ENCODE measurements at regions of chr10 and their contacts with region 1.

Region 1: DNA sequence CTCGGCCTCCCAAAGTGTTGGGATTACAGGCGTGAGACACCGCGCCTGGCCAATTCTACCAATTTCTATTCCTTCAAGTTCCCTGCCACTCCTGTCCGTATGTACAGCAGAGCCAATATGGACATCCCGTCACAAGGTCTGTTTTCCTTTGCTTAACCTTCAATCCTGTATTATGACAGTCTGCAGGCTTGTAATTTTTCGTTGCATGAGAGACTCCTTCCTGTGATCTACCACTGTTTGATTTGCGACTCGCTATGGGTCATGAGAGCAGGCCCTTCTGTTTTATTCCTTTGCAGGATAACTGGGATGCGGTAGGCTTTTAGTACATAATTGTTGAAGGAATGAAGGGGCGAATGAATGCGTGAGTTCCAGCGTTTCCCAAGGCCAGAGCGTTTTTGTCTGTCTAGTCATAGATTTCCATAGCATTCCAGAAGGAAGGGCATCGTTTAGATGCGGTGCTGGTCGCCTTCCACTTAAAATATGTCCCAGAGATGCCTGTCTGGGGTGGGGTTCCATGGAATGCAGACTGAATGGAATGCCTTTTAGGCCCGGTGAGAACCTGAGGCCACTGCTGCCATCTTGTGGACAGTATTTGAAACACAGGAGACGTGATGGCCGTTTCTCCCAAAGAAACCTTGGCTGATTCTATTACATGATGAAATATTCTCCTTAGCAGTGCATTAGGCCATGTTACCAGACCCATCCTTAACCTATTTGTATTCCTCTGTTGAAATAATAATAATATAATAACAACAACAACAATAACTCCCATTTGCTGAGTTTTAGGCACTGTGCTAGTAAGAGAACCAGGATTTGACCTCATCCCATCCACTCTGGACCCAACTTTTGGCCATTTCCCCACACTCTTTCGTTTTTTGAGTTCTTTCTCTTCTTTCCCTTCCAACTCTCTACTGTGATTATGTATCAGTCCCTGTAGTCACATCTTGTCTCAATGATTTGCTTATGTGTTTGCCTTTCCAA is 193.2 kb downstream of the MYOF start:
- DNase-seq: peak; percentile 17
- H3K4me3 Mint-ChIP-seq: no peak overlapping the region
- H3K27ac Mint-ChIP-seq: no peak overlapping the region
- H3K4me1 Mint-ChIP-seq: no peaks in the 10 kb centered on the region
- H3K27me3 Mint-ChIP-seq: peaks cover 6% of the 10 kb centered on the region

Region 2: GRCh38 chr10:92886334-92886961 is 402.5 kb before region 1 on chr10:
- intact Hi-C with region 1: loop called (anchors 5 kb)
- DNase-seq: no peak
- H3K4me3 Mint-ChIP-seq: no peak overlapping the region
- H3K27ac Mint-ChIP-seq: no peak overlapping the region
- H3K4me1 Mint-ChIP-seq: no peaks in the 10 kb centered on the region
- H3K27me3 Mint-ChIP-seq: peaks cover 2% of the 10 kb centered on the region

Region 3: GRCh38 chr10:93080350-93081046 is 208.4 kb before region 1 on chr10:
- intact Hi-C with region 1: loop called (anchors 1 kb)
- DNase-seq: peak; percentile 23
- H3K4me3 Mint-ChIP-seq: no peak overlapping the region
- H3K27ac Mint-ChIP-seq: no peak overlapping the region
- H3K4me1 Mint-ChIP-seq: peaks cover 5% of the 10 kb centered on the region
- H3K27me3 Mint-ChIP-seq: peaks cover 49% of the 10 kb centered on the region

Region 4: GRCh38 chr10:93115661-93116383 is 173.1 kb before region 1 on chr10:
- intact Hi-C with region 1: loop called (anchors 2 kb)
- DNase-seq: peak; percentile 35
- H3K4me3 Mint-ChIP-seq: no peak overlapping the region
- H3K27ac Mint-ChIP-seq: no peak overlapping the region
- H3K4me1 Mint-ChIP-seq: no peaks in the 10 kb centered on the region
- H3K27me3 Mint-ChIP-seq: peaks cover 8% of the 10 kb centered on the region

Measured in activated T-helper 1 cell treated with anti-CD3 and anti-CD28 coated beads, Interleukin-12 subunit alpha, Interleukin-12 subunit beta, Interleukin-2, Interleukin-4 antibody, amounts not matched to agents 30 ng/mL and 10 ng/mL and 1 ng/mL, durations not matched to agents 14 hours and 24 hours and 36 hours (primary cell).